CD8-positive, alpha-beta T cell (primary cell): ENCODE measurements at regions of chr2 and their contacts with region 1.

Region 1: DNA sequence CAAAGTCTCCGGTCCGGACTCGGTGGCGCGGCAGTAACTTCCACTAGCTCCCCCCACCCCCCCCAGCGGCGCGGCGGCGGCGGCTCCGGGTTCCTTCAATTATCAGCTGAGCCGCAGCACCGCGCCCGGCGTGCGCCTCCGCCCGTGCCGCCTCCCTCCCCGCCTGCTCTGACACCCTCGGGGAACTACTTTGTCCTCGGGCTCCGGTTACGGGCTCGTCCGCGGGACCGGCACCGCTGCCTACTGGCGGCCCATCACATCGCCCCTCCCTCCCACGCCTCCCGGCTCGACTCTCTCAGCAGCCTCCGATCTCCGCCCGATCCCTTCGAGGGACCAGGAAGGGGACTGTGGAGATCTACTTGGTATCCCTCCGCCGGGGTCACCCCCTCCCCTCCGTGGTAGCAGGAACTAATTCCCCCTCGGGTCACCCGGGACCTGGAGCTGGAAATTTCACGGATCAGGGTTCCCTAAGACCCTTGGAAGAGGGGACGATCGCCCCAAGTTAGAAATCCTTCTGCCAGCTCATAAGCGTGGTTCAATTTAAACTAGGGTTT is at the start of gene TRIP12:
- DNase-seq: peak; percentile 72 to 95 (median 87)
- ATAC-seq: peak; percentile 73
- H3K4me3 ChIP-seq: peak within 1 kb of the TSS; percentile 88 to 99
- H3K4me3 Mint-ChIP-seq: peak within 1 kb of the TSS; percentile 99
- H3K27ac ChIP-seq: peak within 1 kb of the TSS; percentile 88 to 96
- H3K27ac Mint-ChIP-seq: peak within 1 kb of the TSS; percentile 99
- H3K4me1 ChIP-seq: peaks cover 35% of the 10 kb centered on the region
- H3K4me1 Mint-ChIP-seq: peaks cover 49% of the 10 kb centered on the region
- H3K27me3 ChIP-seq: no peaks in the 10 kb centered on the region
- H3K27me3 Mint-ChIP-seq: no peaks in the 10 kb centered on the region
- CTCF ChIP-seq: no peak
- total RNA-seq, gene TRIP12: 156 to 167 TPM

Region 2: DNA sequence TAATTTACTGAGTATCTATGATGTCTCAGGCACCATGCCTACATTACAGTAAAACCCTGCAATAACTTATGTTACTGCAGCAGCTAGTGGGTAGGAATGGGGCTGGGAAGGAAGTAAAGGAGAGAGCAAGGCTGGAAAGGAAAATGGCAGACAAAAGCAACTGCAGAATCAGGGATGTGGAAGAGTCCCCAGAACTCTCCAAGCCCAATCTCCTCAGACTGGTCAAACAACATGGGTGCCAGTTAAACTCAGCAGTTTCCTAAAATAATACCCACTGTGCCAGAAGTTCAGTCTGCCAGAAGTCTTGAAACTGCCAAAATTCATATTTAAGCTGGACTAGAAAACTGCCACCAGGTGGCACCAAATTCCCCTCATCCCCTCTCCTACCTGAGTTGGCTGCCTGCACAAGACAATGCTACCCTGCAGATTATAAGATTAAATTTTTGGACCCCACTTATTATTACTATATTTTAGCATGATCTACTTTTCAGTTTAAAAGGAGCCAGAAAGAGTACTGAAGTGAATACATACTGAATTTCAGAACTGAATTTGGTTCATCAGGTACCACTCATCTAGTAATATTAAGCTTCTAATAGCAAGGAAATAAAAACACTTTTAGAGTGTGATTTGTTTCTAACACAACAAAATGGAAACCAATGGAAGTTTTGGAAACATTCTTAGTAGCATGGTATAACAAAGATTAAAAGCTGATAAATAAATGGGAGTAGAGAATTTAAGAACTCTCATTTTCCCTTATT is 120.8 kb before region 1 on chr2:
- CTCF ChIA-PET with region 1: interaction called, 11 read pairs
- POLR2A ChIA-PET with region 1: interaction called, 4 read pairs
- intact Hi-C with region 1: loop called in 1 of 2 experiments (anchors 1 kb)
- DNase-seq: peak; percentile 48 to 82 (median 75)
- ATAC-seq: peak; percentile 77
- H3K4me3 ChIP-seq: no peak overlapping the region
- H3K4me3 Mint-ChIP-seq: no peak overlapping the region
- H3K27ac ChIP-seq: no peak overlapping the region
- H3K27ac Mint-ChIP-seq: no peak overlapping the region
- H3K4me1 ChIP-seq: no peaks in the 10 kb centered on the region
- H3K4me1 Mint-ChIP-seq: no peaks in the 10 kb centered on the region
- H3K27me3 ChIP-seq: no peaks in the 10 kb centered on the region
- H3K27me3 Mint-ChIP-seq: no peaks in the 10 kb centered on the region
- CTCF ChIP-seq: peak; percentile 87

Region 3: DNA sequence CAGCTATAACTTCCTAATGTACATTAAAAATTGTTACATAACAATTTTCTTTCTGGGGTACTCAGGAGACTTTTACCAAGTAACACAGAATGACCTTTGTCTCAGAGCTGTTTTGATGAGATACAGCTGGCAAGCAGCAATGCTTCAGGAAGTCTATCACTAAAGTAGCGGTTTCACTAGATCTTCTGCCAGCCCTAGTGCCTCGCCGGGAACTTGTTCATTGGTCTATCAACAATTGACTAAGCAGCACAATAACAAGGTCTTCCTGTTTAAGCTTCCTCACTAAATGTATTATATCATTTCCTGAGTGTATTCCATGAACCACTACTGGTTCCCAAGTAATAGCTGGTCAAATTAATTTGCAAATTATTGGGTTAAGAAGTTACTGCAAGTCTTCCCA is 69.4 kb before region 1 on chr2:
- CTCF ChIA-PET with region 1: no interaction called
- POLR2A ChIA-PET with region 1: interaction called, 7 read pairs
- intact Hi-C with region 1: loop called (anchors 5 kb)
- DNase-seq: peak; percentile 16 to 75 (median 63)
- ATAC-seq: peak; percentile 92
- H3K4me3 ChIP-seq: no peak overlapping the region
- H3K4me3 Mint-ChIP-seq: peak overlapping the region; percentile 33
- H3K27ac ChIP-seq: peak overlapping the region; percentile 0 to 28
- H3K27ac Mint-ChIP-seq: peak overlapping the region; percentile 87
- H3K4me1 ChIP-seq: peaks cover 34% of the 10 kb centered on the region
- H3K4me1 Mint-ChIP-seq: peaks cover 73% of the 10 kb centered on the region
- H3K27me3 ChIP-seq: no peaks in the 10 kb centered on the region
- H3K27me3 Mint-ChIP-seq: no peaks in the 10 kb centered on the region
- CTCF ChIP-seq: no peak

Region 4: DNA sequence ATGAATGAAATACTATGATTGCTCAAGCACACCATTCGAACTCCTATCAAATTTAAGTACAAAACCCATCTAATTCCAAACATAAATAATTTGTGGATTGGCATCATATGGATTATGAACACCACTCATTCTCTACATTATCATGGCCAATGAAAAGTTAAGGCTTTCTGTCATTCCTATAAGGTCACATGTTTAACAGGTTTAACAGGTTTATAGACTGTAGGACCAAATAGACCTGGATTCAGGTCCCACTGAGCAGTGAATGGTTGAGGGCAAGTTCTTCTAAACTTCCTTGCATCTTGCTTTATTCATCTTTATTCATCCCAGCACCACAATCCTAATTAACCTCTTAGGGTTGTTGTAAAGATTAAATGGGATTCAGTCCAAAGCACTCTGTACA is 33.7 kb after region 1 on chr2:
- CTCF ChIA-PET with region 1: no interaction called
- POLR2A ChIA-PET with region 1: no interaction called
- intact Hi-C with region 1: no loop called
- DNase-seq: no peak
- ATAC-seq: no peak
- H3K4me3 ChIP-seq: no peak overlapping the region
- H3K4me3 Mint-ChIP-seq: no peak overlapping the region
- H3K27ac ChIP-seq: no peak overlapping the region
- H3K27ac Mint-ChIP-seq: no peak overlapping the region
- H3K4me1 ChIP-seq: no peaks in the 10 kb centered on the region
- H3K4me1 Mint-ChIP-seq: no peaks in the 10 kb centered on the region
- H3K27me3 ChIP-seq: no peaks in the 10 kb centered on the region
- H3K27me3 Mint-ChIP-seq: no peaks in the 10 kb centered on the region
- CTCF ChIP-seq: no peak

Region 5: GRCh38 chr2:230219419-230220331 is 297.7 kb after region 1 on chr2 and contains the start of gene SP110:
- CTCF ChIA-PET with region 1: no interaction called
- POLR2A ChIA-PET with region 1: interaction called, 3 read pairs
- intact Hi-C with region 1: loop called (anchors 5 to 10 kb)
- DNase-seq: peak; percentile 52 to 89 (median 78)
- ATAC-seq: peak; percentile 93
- H3K4me3 ChIP-seq: peak within 1 kb of the TSS; percentile 90 to 96
- H3K4me3 Mint-ChIP-seq: peak within 1 kb of the TSS; percentile 98
- H3K27ac ChIP-seq: peak within 1 kb of the TSS; percentile 82 to 88
- H3K27ac Mint-ChIP-seq: peak within 1 kb of the TSS; percentile 99
- H3K4me1 ChIP-seq: peaks cover 36% of the 10 kb centered on the region
- H3K4me1 Mint-ChIP-seq: peaks cover 60% of the 10 kb centered on the region
- H3K27me3 ChIP-seq: no peaks in the 10 kb centered on the region
- H3K27me3 Mint-ChIP-seq: no peaks in the 10 kb centered on the region
- CTCF ChIP-seq: no peak
- total RNA-seq, gene SP110: 50.6 to 58.1 TPM

Region 6: DNA sequence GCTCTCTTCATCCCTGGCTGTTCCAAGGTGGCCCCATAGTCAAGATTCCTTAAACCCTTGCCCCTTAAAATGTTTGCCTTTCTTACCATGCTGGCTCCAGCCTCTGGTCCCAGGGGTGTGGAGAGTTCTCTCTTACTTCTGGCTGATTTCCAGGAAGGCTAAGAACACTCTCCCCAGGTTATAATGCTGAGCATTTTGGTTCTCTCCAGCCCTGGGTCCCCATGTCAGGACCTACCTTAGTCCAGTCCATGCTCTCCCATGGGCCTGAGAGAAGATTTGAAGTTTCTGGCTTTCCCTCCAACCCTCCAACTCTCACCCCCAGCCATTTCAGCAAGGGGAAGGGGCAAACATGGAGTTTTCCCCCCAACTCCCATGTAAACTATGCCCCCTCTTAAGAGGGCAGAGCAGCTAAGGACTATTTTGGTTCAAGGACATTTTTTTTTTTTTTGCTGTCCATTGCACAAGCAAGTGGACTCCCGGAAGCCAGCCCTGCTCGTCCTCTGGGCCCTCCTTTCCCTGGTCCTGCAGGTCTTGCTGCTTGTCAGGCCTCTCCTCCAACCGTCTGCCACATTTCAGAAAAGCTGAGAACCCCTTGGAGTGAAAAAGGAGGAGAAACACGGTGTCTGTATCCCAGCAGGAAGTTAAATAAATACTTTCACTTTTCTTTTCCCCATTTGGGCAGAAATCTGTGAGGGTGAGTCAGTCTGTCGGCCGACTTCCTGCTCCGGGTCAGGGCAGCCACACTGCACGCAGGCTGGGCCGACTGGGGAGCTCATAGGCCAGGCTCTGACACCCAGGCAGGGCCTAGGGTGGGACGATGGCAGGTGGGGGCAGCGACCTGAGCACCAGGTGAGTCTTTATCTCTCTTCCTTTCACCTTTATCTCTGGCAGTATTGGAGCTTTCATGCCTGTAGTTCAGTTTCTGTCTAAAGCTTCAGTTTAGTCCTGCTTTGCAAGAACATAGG is 404.8 kb after region 1 on chr2 and contains the start of gene SP140L:
- CTCF ChIA-PET with region 1: no interaction called
- POLR2A ChIA-PET with region 1: no interaction called
- intact Hi-C with region 1: loop called in 1 of 2 experiments (anchors 5 kb)
- DNase-seq: peak; percentile 56 to 91 (median 82)
- ATAC-seq: peak; percentile 100
- H3K4me3 ChIP-seq: peak within 1 kb of the TSS; percentile 63 to 80
- H3K4me3 Mint-ChIP-seq: peak within 1 kb of the TSS; percentile 96
- H3K27ac ChIP-seq: peak within 1 kb of the TSS; percentile 88 to 90
- H3K27ac Mint-ChIP-seq: peak within 1 kb of the TSS; percentile 99
- H3K4me1 ChIP-seq: peaks cover 44% of the 10 kb centered on the region
- H3K4me1 Mint-ChIP-seq: peaks cover 80% of the 10 kb centered on the region
- H3K27me3 ChIP-seq: no peaks in the 10 kb centered on the region
- H3K27me3 Mint-ChIP-seq: no peaks in the 10 kb centered on the region
- CTCF ChIP-seq: no peak
- total RNA-seq, gene SP140L: 69.8 to 70.5 TPM

Region 7: DNA sequence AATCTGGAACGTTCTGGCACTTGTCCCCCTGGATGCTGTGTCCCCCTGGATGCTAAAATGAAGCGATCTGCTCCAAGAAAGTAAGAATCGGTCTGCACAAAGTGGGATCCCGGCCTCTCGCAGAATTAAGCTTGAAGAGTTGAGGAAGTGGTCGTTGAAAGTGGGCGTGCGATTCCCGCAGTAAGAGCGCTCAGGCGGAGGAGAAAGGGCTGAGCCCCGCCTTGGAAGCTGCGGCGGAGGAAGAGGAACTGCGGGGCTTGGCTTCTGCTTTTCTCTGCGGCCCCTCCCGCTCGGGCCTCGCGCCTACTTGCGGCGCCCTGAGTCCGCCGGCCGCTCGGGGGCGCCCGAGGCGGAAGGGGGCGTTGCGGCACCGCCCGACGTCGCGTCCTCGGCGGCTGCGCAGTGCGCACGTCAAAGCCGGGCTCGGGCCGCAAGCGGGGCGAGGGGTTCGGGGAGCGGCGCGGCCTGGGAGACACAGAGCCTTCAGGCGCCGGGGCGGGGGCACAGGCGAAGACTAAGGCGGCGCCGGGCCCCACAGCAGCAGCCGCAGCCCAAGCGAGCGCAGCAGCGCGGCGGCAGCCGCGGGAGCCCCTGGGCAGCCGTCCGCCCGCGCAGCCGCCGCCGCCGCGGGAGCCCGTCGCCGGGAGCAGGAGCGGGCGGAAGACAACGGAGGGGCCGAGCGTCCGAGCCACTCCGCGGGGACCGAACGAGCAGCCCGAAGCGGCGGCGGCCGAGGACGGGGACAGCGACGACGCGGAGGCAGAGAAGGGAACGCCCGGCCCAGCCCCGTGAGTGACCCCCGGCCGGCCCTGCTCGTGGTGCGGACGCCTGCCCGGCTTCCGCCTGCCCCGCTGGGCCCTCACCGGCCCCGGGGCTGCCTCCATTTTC is 790.7 kb after region 1 on chr2 and contains the start of gene CAB39:
- CTCF ChIA-PET with region 1: no interaction called
- POLR2A ChIA-PET with region 1: no interaction called
- intact Hi-C with region 1: loop called (anchors 2 to 5 kb)
- DNase-seq: peak; percentile 76 to 95 (median 86)
- ATAC-seq: peak; percentile 87
- H3K4me3 ChIP-seq: peak within 1 kb of the TSS; percentile 76 to 79
- H3K4me3 Mint-ChIP-seq: peak within 1 kb of the TSS; percentile 95
- H3K27ac ChIP-seq: peak within 1 kb of the TSS; percentile 65 to 79
- H3K27ac Mint-ChIP-seq: peak within 1 kb of the TSS; percentile 97
- H3K4me1 ChIP-seq: peaks cover 30% of the 10 kb centered on the region
- H3K4me1 Mint-ChIP-seq: peaks cover 44% of the 10 kb centered on the region
- H3K27me3 ChIP-seq: no peaks in the 10 kb centered on the region
- H3K27me3 Mint-ChIP-seq: no peaks in the 10 kb centered on the region
- CTCF ChIP-seq: peak; percentile 76
- total RNA-seq, gene CAB39: 36.4 to 42.6 TPM

Region 8: GRCh38 chr2:231463698-231464575 is 1542.0 kb after region 1 on chr2 and contains the start of gene NCL:
- CTCF ChIA-PET with region 1: no interaction called
- POLR2A ChIA-PET with region 1: interaction called, 4 read pairs
- intact Hi-C with region 1: loop called (anchors 5 kb)
- DNase-seq: peak; percentile 71 to 94 (median 82)
- ATAC-seq: peak; percentile 62
- H3K4me3 ChIP-seq: peak within 1 kb of the TSS; percentile 97
- H3K4me3 Mint-ChIP-seq: peak within 1 kb of the TSS; percentile 96
- H3K27ac ChIP-seq: peak within 1 kb of the TSS; percentile 97 to 98
- H3K27ac Mint-ChIP-seq: peak within 1 kb of the TSS; percentile 100
- H3K4me1 ChIP-seq: peaks cover 36% of the 10 kb centered on the region
- H3K4me1 Mint-ChIP-seq: peaks cover 52% of the 10 kb centered on the region
- H3K27me3 ChIP-seq: no peaks in the 10 kb centered on the region
- H3K27me3 Mint-ChIP-seq: no peaks in the 10 kb centered on the region
- CTCF ChIP-seq: no peak
- total RNA-seq, gene NCL: 390 to 394 TPM